ENCODE measurements at regions of chr1 and their contacts with region 1.

Region 1: GRCh38 chr1:168637350-168637991 is 61.1 kb downstream of the XCL1 start:
- DNase-seq: peak; percentile 29
- CTCF ChIP-seq: peak; percentile 39

Region 2: DNA sequence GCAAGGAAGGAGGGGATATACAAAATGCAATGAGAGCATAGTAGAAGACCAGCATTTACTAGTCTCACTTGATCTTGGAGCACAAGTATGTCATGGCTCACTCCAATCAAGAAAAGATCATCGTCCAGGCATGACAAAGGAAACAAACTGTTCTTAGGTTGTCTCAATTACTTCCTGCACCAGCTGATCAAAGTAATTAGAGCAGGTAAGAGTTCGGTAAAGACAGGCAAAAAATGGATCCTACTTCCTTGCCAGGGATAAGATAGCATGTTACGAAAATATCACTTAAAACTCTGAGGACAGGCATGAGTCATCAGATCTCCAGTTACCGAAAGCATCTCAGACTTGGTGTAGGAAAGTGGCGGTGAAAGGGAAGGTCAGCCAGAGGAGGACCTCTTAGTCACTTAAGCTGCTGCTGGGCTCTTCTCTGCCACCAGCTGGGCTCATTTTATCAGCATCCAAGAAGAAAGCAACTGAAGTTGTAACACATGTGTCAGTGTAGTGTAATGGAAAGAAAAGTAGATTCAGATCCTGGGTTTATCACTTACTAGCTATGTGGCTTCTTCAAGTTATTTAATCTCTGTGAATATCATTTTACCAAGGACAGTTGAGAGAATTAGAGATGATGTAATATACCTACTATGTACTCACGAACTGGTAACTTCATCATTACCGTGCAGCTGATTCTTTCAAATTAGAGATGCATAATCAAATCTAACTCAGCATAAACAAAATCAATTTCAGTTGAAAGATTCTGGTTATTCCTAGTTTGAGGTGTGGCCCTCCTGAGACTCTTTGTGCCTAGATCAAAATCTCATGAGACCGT is 14.3 kb before region 1 on chr1:
- CTCF ChIA-PET with region 1: interaction called, 22 read pairs
- POLR2A ChIA-PET with region 1: no interaction called
- DNase-seq: no peak
- CTCF ChIP-seq: no peak

Region 3: DNA sequence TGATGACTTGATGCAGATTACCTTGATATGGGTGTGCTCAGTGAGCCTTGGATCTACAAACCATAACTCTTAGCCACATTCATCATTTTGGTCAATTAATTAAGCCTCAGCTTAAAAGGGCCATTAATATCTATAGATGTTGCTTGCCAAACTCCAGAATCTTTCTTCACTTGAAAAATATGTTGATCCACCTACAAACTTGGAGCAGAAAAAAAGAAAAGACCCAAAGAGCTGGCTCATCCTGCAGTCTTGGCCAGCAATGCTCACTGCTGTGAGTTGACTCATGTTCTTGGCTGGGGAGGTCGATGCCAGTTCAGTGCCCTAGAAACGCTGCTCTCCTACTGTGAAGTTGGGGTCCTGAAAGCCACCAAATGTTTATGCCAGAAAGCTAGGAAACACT is 16.1 kb after region 1 on chr1:
- CTCF ChIA-PET with region 1: interaction called, 14 read pairs
- POLR2A ChIA-PET with region 1: no interaction called
- DNase-seq: no peak
- CTCF ChIP-seq: no peak

Region 4: DNA sequence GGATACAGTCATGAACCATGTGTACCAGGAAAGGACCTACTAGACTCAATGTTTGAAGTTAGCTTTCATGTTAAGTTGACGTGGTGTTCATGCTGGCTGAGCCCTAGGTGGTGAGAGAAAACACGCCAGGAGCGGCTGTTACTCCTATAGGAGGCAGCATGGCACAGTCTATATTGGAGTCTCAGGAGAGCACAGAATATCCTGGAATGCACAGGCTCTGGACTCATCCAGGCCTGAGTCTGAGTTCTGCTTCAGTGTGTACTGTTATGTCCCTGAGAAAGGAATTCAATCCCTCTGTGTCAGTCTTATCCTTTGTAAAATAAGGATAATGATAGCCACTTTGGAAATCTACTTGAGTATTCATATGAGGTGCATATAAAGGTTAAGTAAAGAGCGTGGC is 50.3 kb after region 1 on chr1:
- CTCF ChIA-PET with region 1: no interaction called
- POLR2A ChIA-PET with region 1: no interaction called
- DNase-seq: no peak
- CTCF ChIP-seq: no peak

Region 5: GRCh38 chr1:168719306-168720111 is 82.0 kb after region 1 on chr1:
- CTCF ChIA-PET with region 1: no interaction called
- POLR2A ChIA-PET with region 1: no interaction called
- DNase-seq: peak; percentile 29
- CTCF ChIP-seq: no peak